B cell (primary cell): ENCODE measurements at regions of chr5 and their contacts with region 1.

Region 1: GRCh38 chr5:472656-473553 is 29.9 kb downstream of the EXOC3 start:
- DNase-seq: peak; percentile 90
- ATAC-seq: peak; percentile 83
- H3K4me3 ChIP-seq: peak overlapping the region; percentile 11 to 89 (median 75)
- H3K4me3 Mint-ChIP-seq: peak overlapping the region; percentile 79
- H3K27ac ChIP-seq: peak overlapping the region; percentile 44 to 78
- H3K27ac Mint-ChIP-seq: peak overlapping the region; percentile 65
- H3K4me1 ChIP-seq: peaks cover 34 to 40% of the 10 kb centered on the region in 2 donors
- H3K4me1 Mint-ChIP-seq: peaks cover 31% of the 10 kb centered on the region
- H3K27me3 ChIP-seq: peaks cover 0 to 40% (median 8%) of the 10 kb centered on the region in 4 experiments
- H3K27me3 Mint-ChIP-seq: peaks cover 20% of the 10 kb centered on the region
- CTCF ChIP-seq: no peak

Region 2: GRCh38 chr5:442335-443238 is 30.3 kb before region 1 on chr5 and contains the start of gene EXOC3:
- CTCF ChIA-PET with region 1: interaction called, 28 read pairs
- POLR2A ChIA-PET with region 1: interaction called, 5 read pairs
- intact Hi-C with region 1: loop called (anchors 2 kb)
- DNase-seq: peak; percentile 82
- ATAC-seq: peak; percentile 91
- H3K4me3 ChIP-seq: peak within 1 kb of the TSS; percentile 53 to 91 (median 89)
- H3K4me3 Mint-ChIP-seq: peak within 1 kb of the TSS; percentile 96
- H3K27ac ChIP-seq: peak within 1 kb of the TSS; percentile 56 to 81
- H3K27ac Mint-ChIP-seq: peak within 1 kb of the TSS; percentile 90
- H3K4me1 ChIP-seq: peaks cover 6 to 19% of the 10 kb centered on the region in 2 donors
- H3K4me1 Mint-ChIP-seq: peaks cover 30% of the 10 kb centered on the region
- H3K27me3 ChIP-seq: no peaks in the 10 kb centered on the region
- H3K27me3 Mint-ChIP-seq: no peaks in the 10 kb centered on the region
- CTCF ChIP-seq: no peak
- total RNA-seq, gene EXOC3: 92.6 and 97.1 TPM in 2 replicates

Region 3: DNA sequence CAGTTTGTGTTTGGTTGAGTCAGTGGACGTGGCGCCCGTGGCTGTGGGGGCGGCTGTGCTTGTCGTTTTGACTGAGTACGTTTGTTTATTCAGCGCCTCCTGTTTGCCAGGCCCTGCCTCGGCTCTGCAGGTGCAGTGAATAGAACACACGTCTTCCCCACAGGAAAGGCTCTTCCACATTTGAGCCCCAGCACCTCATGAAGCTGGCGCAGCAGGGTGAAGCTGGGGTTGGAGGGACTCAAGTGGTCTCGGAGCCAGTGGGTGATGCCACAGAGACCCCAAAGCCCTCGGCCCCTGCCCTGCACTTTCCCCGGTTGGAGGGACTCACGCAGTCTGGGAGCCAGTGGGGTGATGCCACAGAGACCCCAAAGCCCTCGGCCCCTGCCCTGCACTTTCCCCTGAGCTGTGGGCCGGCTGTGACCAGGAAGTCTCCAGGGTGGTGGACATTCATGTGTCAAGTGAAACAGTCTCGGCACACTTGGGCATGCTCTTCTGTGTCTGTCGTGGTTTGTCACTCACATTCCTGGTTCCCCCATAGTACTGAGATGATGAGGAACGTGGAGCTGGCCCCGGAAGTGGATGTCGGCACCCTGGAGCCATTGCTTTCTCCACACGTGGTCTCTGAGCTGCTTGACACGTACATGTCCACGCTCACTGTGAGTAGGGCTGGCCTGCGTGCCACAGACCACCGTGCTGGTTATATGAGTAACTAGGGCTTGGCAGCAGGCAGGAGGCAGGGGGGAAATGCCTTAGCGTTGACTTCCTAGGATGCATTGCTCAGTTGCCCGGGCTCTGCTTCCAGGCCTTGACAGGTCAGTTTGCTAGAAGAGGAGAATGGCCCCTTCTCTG is 16.3 kb before region 1 on chr5:
- CTCF ChIA-PET with region 1: no interaction called
- POLR2A ChIA-PET with region 1: no interaction called
- intact Hi-C with region 1: no loop called
- DNase-seq: no peak
- ATAC-seq: no peak
- H3K4me3 ChIP-seq: no peak overlapping the region
- H3K4me3 Mint-ChIP-seq: no peak overlapping the region
- H3K27ac ChIP-seq: no peak overlapping the region
- H3K27ac Mint-ChIP-seq: no peak overlapping the region
- H3K4me1 ChIP-seq: no peaks in the 10 kb centered on the region
- H3K4me1 Mint-ChIP-seq: peaks cover 3% of the 10 kb centered on the region
- H3K27me3 ChIP-seq: no peaks in the 10 kb centered on the region
- H3K27me3 Mint-ChIP-seq: no peaks in the 10 kb centered on the region
- CTCF ChIP-seq: no peak

Region 4: DNA sequence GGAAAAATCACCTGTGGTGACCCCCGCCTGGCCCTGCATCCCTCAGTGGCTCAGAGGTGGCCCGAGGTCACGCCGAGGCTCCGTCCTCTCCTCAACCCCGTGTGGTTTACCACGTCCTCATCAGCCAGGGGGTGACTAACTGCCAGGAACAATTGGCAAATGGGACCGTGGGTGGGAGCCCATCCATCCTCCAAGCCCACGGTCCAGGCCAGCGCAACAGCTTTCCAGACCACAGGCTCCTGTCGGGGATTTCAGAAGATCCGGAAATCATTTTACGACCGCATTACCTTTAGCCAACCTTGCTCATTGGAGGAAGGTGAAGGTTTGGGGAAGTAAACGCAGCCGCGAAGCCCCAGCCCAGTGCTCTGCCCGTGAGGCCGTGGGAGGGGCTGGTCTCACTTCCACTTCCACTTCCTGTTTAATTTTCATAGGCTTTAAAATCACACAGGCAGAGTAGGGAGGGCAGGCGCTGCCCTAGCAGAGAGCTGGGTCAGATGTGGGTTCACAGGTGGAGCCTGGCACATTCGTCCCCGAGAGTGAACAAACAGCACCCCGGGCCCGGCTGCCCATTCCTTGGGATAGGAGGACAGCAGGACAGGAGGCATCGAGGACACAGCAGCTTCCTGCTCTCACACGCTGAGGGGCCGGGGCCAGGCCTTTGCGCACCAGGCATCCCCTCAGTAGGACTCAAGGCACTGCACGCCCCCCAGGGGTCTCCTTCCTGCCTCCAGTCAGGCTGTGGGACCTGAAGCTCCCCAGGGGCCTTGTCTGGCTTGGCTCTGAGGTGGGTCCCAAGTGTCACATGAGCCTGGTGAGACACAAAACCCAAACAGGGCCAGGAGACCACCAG is 71.1 kb after region 1 on chr5:
- CTCF ChIA-PET with region 1: no interaction called
- POLR2A ChIA-PET with region 1: interaction called, 3 read pairs
- intact Hi-C with region 1: loop called (anchors 2 kb)
- DNase-seq: peak; percentile 93
- ATAC-seq: peak; percentile 94
- H3K4me3 ChIP-seq: peak overlapping the region in 3 of 5 experiments; percentile 24 to 56 (median 30)
- H3K4me3 Mint-ChIP-seq: peak overlapping the region; percentile 80
- H3K27ac ChIP-seq: peak overlapping the region; percentile 79 to 81
- H3K27ac Mint-ChIP-seq: peak overlapping the region; percentile 81
- H3K4me1 ChIP-seq: peaks cover 36 to 44% of the 10 kb centered on the region in 2 donors
- H3K4me1 Mint-ChIP-seq: peaks cover 28% of the 10 kb centered on the region
- H3K27me3 ChIP-seq: peaks cover 0 to 80% (median 31%) of the 10 kb centered on the region in 4 experiments
- H3K27me3 Mint-ChIP-seq: peaks cover 19% of the 10 kb centered on the region
- CTCF ChIP-seq: no peak

Region 5: GRCh38 chr5:611721-612486 is 139.0 kb after region 1 on chr5 and contains the start of gene CEP72:
- CTCF ChIA-PET with region 1: no interaction called
- POLR2A ChIA-PET with region 1: no interaction called
- intact Hi-C with region 1: loop called (anchors 1 kb)
- DNase-seq: peak; percentile 92
- ATAC-seq: peak; percentile 95
- H3K4me3 ChIP-seq: peak within 1 kb of the TSS; percentile 62 to 83 (median 73)
- H3K4me3 Mint-ChIP-seq: peak within 1 kb of the TSS; percentile 92
- H3K27ac ChIP-seq: peak within 1 kb of the TSS; percentile 36 to 49
- H3K27ac Mint-ChIP-seq: peak within 1 kb of the TSS; percentile 87
- H3K4me1 ChIP-seq: peaks cover 23 to 28% of the 10 kb centered on the region in 2 donors
- H3K4me1 Mint-ChIP-seq: peaks cover 37% of the 10 kb centered on the region
- H3K27me3 ChIP-seq: peaks cover 0 to 19% (median 5%) of the 10 kb centered on the region in 4 experiments
- H3K27me3 Mint-ChIP-seq: peaks cover 9% of the 10 kb centered on the region
- CTCF ChIP-seq: no peak
- total RNA-seq, gene CEP72: 30.0 and 32.9 TPM in 2 replicates